GM10248 (cell line): ENCODE measurements at regions of chr1 and their contacts with region 1.

Region 1: DNA sequence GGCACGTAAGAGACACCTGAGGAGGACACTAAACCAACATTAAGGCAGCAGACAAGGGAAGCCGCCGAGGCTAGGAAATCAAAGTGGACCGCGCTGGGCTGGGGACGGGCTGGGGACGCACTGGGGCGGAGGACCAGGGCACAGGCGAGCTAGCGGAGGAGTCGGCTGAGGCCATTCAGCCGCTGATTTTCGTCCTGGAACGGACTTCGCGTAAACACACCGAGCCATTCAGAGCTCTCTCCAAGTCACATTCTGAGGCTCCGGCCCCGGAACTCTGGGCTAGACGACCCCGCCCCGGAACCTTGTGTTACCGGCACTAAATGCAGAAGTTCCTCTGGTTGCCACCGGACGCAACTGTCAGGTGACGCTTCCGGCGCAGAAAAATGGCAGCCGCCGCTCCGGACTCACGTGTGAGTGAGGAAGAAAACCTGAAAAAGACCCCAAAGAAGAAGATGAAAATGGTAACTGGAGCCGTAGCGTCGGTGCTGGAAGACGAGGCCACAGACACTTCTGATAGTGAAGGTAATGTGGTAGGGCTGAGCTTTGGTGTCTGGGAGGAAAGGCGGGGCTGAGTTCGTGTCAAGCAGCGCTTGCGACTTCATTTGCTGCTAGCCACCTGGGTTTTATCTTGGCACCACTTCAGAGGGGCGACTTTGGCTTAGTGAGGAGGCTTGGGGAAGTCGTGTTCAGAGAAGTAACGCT is at the start of gene RRP15:
- DNase-seq: peak; percentile 89
- CTCF ChIP-seq: no peak

Region 2: DNA sequence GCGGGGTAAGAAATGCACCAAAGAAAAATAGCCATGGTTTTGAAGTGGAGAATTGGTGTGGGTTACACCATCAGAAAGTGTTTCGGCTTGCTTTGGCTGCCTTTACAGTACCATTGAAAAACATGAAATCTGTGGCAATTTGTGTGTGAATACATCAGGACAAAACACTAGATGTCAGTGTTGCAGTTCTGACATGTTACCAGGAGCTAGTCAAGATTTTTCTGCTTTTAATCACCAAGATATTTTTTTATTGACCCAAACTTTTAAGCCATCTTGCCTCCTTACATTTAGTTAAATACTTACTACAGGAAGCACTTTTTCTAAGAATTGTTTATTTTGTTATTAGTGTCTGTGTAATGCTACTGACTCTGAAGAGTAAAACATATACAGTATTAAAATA is 14.3 kb after region 1 on chr1:
- CTCF ChIA-PET with region 1: interaction called, 14 read pairs
- POLR2A ChIA-PET with region 1: interaction called, 4 read pairs
- DNase-seq: no peak
- CTCF ChIP-seq: peak; percentile 50